Psoas muscle (tissue), 8 donors: ENCODE measurements at regions of chr10 and their contacts with region 1.

Region 1: GRCh38 chr10:5385224-5385623 is 19.4 kb downstream of the TUBAL3 start:
- DNase-seq: no peak
- ATAC-seq: no peak
- H3K4me3 ChIP-seq: no peak overlapping the region
- H3K27ac ChIP-seq: no peak overlapping the region
- H3K4me1 ChIP-seq: no peaks in the 10 kb centered on the region
- H3K27me3 ChIP-seq: no peaks in the 10 kb centered on the region
- CTCF ChIP-seq: no peak

Region 2: GRCh38 chr10:5434017-5434753 is 49.0 kb after region 1 on chr10:
- intact Hi-C with region 1: loop called (anchors 5 kb)
- DNase-seq: no peak
- ATAC-seq: peak; percentile 54 to 89 (median 72)
- H3K4me3 ChIP-seq: no peak overlapping the region
- H3K27ac ChIP-seq: peak overlapping the region; percentile 5
- H3K4me1 ChIP-seq: peaks cover 8% of the 10 kb centered on the region
- H3K27me3 ChIP-seq: no peaks in the 10 kb centered on the region
- CTCF ChIP-seq: peak; percentile 62